Body of pancreas (tissue), 4 donors: ENCODE measurements at regions of chr5 and their contacts with region 1.

Region 1: DNA sequence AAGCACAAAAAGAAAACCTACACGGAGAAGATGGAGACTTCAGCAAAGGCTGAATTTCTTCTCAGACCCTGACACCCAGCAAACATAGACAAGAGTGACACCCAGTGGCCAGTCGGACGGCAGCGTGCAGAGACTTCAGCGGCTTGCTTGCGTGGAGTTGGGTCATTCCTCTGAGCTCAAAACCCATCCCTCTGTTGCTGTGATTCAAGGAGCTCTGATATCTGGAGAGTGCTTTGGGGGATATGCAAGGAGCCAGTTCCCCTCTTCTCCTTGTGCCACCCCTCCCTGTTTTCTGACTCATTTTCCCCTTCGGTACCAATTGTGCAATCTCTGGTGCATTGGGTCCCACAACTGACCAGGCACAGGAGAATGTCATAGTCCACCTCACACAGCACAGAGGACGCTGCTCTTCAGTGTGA is 27.5 kb downstream of the SH3TC2 start:
- DNase-seq: peak; percentile 71 to 75 (median 72)
- ATAC-seq: peak; percentile 80
- H3K4me3 ChIP-seq: no peak overlapping the region
- H3K27ac ChIP-seq: no peak overlapping the region
- H3K4me1 ChIP-seq: no peaks in the 10 kb centered on the region
- H3K27me3 ChIP-seq: no peaks in the 10 kb centered on the region
- CTCF ChIP-seq: peak; percentile 58 to 87 (median 80)
- POLR2A ChIP-seq: no peak

Region 2: DNA sequence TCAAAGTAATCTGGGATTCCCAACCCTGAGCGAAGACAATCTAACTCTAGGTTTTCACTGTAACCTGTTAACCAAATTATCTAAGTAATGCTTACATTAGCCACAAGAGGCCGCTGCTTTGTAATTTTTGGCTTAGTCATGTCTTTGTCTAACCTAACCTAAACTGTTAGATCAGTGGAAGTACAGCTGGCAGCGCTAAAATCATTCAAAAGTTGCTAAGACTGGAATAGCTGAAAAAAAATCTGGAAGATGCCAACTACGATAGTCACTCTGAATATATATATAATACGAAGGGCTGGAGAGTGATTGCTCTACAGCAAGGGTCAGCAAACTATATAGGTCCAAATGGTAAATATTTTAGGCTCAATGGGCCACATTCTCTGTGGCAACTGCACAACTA is 591.4 kb before region 1 on chr5:
- intact Hi-C with region 1: loop called (anchors 10 kb)
- DNase-seq: peak; percentile 51 to 68 (median 52)
- ATAC-seq: peak; percentile 88
- H3K4me3 ChIP-seq: no peak overlapping the region
- H3K27ac ChIP-seq: no peak overlapping the region
- H3K4me1 ChIP-seq: no peaks in the 10 kb centered on the region
- H3K27me3 ChIP-seq: no peaks in the 10 kb centered on the region
- CTCF ChIP-seq: peak; percentile 20 to 87 (median 74)
- POLR2A ChIP-seq: no peak

Region 3: GRCh38 chr5:149114403-149115312 is 79.3 kb after region 1 on chr5:
- intact Hi-C with region 1: no loop called
- DNase-seq: peak; percentile 67 to 79 (median 74)
- ATAC-seq: peak; percentile 93
- H3K4me3 ChIP-seq: no peak overlapping the region
- H3K27ac ChIP-seq: peak overlapping the region in 3 of 4 donors; percentile 31 to 65 (median 35)
- H3K4me1 ChIP-seq: peaks cover 10% of the 10 kb centered on the region
- H3K27me3 ChIP-seq: no peaks in the 10 kb centered on the region
- CTCF ChIP-seq: peak; percentile 54 to 86 (median 79)
- POLR2A ChIP-seq: no peak